Naive thymus-derived CD4-positive, alpha-beta T cell (primary cell): ENCODE measurements at regions of chr1 and their contacts with region 1.

Region 1: DNA sequence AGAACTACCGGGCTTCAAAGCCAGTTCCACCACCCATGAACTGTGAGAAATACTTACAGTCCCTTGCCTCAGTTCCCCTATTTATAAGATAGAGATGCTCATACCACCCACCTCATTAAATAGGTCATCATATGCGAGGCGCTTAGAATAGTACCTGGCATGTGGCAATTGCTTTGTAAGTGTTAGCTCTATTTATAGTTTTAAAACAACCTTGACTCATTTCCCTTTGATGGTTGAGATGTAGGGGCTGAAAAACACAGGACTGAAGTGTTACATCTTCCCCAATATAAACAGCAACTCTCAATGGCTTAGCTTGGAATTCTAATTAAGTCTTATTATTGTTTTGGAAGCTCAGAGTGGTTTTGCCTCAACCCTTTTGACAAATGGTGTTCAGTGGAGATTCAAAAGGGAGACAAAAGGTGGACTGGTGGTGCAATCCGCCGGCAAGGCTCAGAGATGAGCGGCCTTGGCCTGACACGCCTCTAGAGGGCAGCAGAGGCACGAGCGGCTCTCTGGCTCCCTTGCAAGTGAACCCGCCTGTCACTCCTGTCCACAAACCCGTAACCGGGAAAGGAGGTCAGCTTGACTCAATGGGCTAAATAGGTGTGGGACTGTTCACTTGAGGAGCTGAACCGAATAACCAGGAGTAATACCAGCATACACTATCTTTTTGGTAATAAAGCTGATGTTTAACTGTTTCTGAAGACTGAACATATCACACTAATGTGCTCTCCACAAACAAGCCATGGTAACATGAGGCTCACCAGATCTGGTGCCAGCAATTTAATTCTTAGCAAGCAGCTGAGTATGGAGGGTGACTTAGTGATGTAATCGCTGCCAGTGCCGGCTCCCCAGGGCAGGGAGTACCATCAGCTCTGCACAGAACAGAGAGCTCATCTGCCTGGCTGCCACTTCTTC is 19.5 kb upstream of the SMYD2 start:
- DNase-seq: peak; percentile 47 to 82 (median 73)
- ATAC-seq: peak; percentile 98
- H3K4me3 ChIP-seq: no peak overlapping the region
- H3K4me3 Mint-ChIP-seq: peak overlapping the region in 1 of 10 donors; percentile 28
- H3K27ac ChIP-seq: no peak overlapping the region
- H3K27ac Mint-ChIP-seq: no peak overlapping the region
- H3K4me1 ChIP-seq: no peaks in the 10 kb centered on the region
- H3K4me1 Mint-ChIP-seq: peaks cover 0 to 15% (median 0%) of the 10 kb centered on the region in 7 donors
- H3K27me3 ChIP-seq: peaks cover 0 to 9% of the 10 kb centered on the region in 2 donors
- H3K27me3 Mint-ChIP-seq: peaks cover 55 to 75% (median 68%) of the 10 kb centered on the region in 5 donors

Region 2: GRCh38 chr1:213374369-213374768 is 887.1 kb before region 1 on chr1:
- CTCF ChIA-PET with region 1: no interaction called
- POLR2A ChIA-PET with region 1: no interaction called
- intact Hi-C with region 1: loop called in 1 of 2 experiments (anchors 1 kb)
- DNase-seq: peak; percentile 12 to 60 (median 42)
- ATAC-seq: peak; percentile 61
- H3K4me3 ChIP-seq: no peak overlapping the region
- H3K4me3 Mint-ChIP-seq: no peak overlapping the region
- H3K27ac ChIP-seq: no peak overlapping the region
- H3K27ac Mint-ChIP-seq: no peak overlapping the region
- H3K4me1 ChIP-seq: no peaks in the 10 kb centered on the region
- H3K4me1 Mint-ChIP-seq: no peaks in the 10 kb centered on the region
- H3K27me3 ChIP-seq: no peaks in the 10 kb centered on the region
- H3K27me3 Mint-ChIP-seq: peaks cover 0 to 7% (median 0%) of the 10 kb centered on the region in 5 donors

Region 3: DNA sequence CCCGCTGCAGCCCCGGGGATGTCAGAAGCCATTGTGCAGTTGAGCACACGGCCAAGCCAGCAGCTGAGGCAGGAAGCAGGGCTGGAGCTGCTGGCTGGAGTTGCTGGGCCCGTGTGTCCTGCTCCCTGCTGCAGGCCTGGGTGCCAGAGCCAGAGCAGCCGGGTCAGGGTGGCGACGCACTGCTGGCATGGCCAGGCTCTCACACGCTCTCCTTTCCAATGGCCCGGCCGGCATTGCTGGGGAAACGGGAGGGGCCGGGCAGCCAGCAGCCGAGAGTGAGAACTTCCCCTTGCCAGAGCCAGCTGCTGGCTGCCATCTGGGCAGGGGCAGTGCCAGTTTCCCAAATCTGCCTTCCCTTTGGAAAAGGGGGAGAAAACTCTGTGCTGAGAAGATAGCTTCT is 356.1 kb before region 1 on chr1:
- CTCF ChIA-PET with region 1: no interaction called
- POLR2A ChIA-PET with region 1: no interaction called
- intact Hi-C with region 1: no loop called
- DNase-seq: no peak
- ATAC-seq: no peak
- H3K4me3 ChIP-seq: no peak overlapping the region
- H3K4me3 Mint-ChIP-seq: no peak overlapping the region
- H3K27ac ChIP-seq: no peak overlapping the region
- H3K27ac Mint-ChIP-seq: no peak overlapping the region
- H3K4me1 ChIP-seq: no peaks in the 10 kb centered on the region
- H3K4me1 Mint-ChIP-seq: peaks cover 0 to 5% (median 0%) of the 10 kb centered on the region in 7 donors
- H3K27me3 ChIP-seq: no peaks in the 10 kb centered on the region
- H3K27me3 Mint-ChIP-seq: peaks cover 0 to 7% (median 0%) of the 10 kb centered on the region in 5 donors

Region 4: DNA sequence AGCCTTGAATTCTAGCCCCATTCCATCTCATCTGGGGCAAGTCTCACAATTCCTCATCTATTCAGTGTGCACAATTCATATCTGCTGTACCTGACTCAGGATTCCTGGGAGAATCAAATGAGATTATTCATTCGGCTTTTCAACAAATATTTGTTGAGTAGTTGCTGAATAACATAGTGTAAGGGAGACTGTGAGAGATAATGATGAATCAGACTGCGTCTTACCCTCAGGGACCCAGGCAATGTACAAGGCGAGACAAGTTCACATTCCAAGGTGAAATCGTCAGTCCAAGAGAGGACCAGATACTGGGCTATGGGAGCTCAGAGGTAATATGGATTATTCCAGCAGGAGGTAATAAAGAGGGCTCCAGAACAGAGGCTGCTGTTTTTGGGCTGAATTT is 48.3 kb before region 1 on chr1:
- CTCF ChIA-PET with region 1: interaction called, 9 read pairs
- POLR2A ChIA-PET with region 1: no interaction called
- intact Hi-C with region 1: loop called (anchors 1 kb)
- DNase-seq: no peak
- ATAC-seq: no peak
- H3K4me3 ChIP-seq: no peak overlapping the region
- H3K4me3 Mint-ChIP-seq: no peak overlapping the region
- H3K27ac ChIP-seq: no peak overlapping the region
- H3K27ac Mint-ChIP-seq: no peak overlapping the region
- H3K4me1 ChIP-seq: no peaks in the 10 kb centered on the region
- H3K4me1 Mint-ChIP-seq: peaks cover 0 to 10% (median 5%) of the 10 kb centered on the region in 7 donors
- H3K27me3 ChIP-seq: no peaks in the 10 kb centered on the region
- H3K27me3 Mint-ChIP-seq: peaks cover 7 to 38% (median 13%) of the 10 kb centered on the region in 5 donors

Region 5: DNA sequence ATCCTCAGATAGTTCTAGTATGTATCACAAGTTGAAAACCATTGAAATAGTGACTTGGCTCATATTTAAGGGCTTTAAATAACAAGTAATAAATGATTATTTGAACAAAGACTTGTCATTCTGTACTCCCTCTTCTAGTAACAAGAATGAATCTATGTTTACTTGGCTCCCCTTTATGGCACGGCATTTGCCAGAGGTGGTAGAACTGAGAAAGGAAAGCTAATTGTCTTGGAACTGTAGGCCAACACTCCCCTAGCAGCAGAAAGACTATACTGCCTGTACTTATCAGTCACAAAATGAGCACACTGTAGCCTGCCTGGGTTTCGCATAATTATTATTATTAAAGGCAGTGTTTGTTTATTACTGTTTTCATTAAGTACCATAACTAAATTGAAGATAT is 10.1 kb before region 1 on chr1:
- CTCF ChIA-PET with region 1: interaction called, 10 read pairs
- POLR2A ChIA-PET with region 1: no interaction called
- intact Hi-C with region 1: no loop called
- DNase-seq: no peak
- ATAC-seq: no peak
- H3K4me3 ChIP-seq: no peak overlapping the region
- H3K4me3 Mint-ChIP-seq: no peak overlapping the region
- H3K27ac ChIP-seq: no peak overlapping the region
- H3K27ac Mint-ChIP-seq: no peak overlapping the region
- H3K4me1 ChIP-seq: no peaks in the 10 kb centered on the region
- H3K4me1 Mint-ChIP-seq: no peaks in the 10 kb centered on the region
- H3K27me3 ChIP-seq: no peaks in the 10 kb centered on the region
- H3K27me3 Mint-ChIP-seq: peaks cover 21 to 55% (median 32%) of the 10 kb centered on the region in 5 donors

Region 6: GRCh38 chr1:214310010-214310409 is 48.5 kb after region 1 on chr1:
- CTCF ChIA-PET with region 1: interaction called, 11 read pairs
- POLR2A ChIA-PET with region 1: no interaction called
- intact Hi-C with region 1: no loop called
- DNase-seq: no peak
- ATAC-seq: no peak
- H3K4me3 ChIP-seq: no peak overlapping the region
- H3K4me3 Mint-ChIP-seq: peak overlapping the region in 9 of 10 donors; percentile 7 to 78 (median 57)
- H3K27ac ChIP-seq: no peak overlapping the region
- H3K27ac Mint-ChIP-seq: peak overlapping the region in 2 of 9 donors; percentile 22 to 49
- H3K4me1 ChIP-seq: peaks cover 17% of the 10 kb centered on the region in 2 donors
- H3K4me1 Mint-ChIP-seq: peaks cover 21 to 48% (median 43%) of the 10 kb centered on the region in 7 donors
- H3K27me3 ChIP-seq: no peaks in the 10 kb centered on the region
- H3K27me3 Mint-ChIP-seq: no peaks in the 10 kb centered on the region

Region 7: GRCh38 chr1:214584805-214585766 is 323.6 kb after region 1 on chr1:
- CTCF ChIA-PET with region 1: no interaction called
- POLR2A ChIA-PET with region 1: no interaction called
- intact Hi-C with region 1: loop called (anchors 1 to 2 kb)
- DNase-seq: peak in 3 of 9 donors; percentile 9 to 12 (median 10)
- ATAC-seq: peak; percentile 45
- H3K4me3 ChIP-seq: no peak overlapping the region
- H3K4me3 Mint-ChIP-seq: no peak overlapping the region
- H3K27ac ChIP-seq: no peak overlapping the region
- H3K27ac Mint-ChIP-seq: no peak overlapping the region
- H3K4me1 ChIP-seq: no peaks in the 10 kb centered on the region
- H3K4me1 Mint-ChIP-seq: peaks cover 0 to 4% (median 0%) of the 10 kb centered on the region in 7 donors
- H3K27me3 ChIP-seq: no peaks in the 10 kb centered on the region
- H3K27me3 Mint-ChIP-seq: peaks cover 0 to 12% (median 4%) of the 10 kb centered on the region in 5 donors

Region 8: GRCh38 chr1:215526553-215527151 is 1265.2 kb after region 1 on chr1:
- CTCF ChIA-PET with region 1: interaction called, 3 read pairs
- POLR2A ChIA-PET with region 1: no interaction called
- intact Hi-C with region 1: loop called (anchors 1 to 5 kb)
- DNase-seq: peak in 7 of 9 donors; percentile 16 to 56 (median 47)
- ATAC-seq: peak; percentile 52
- H3K4me3 ChIP-seq: no peak overlapping the region
- H3K4me3 Mint-ChIP-seq: no peak overlapping the region
- H3K27ac ChIP-seq: no peak overlapping the region
- H3K27ac Mint-ChIP-seq: no peak overlapping the region
- H3K4me1 ChIP-seq: no peaks in the 10 kb centered on the region
- H3K4me1 Mint-ChIP-seq: peaks cover 0 to 3% (median 0%) of the 10 kb centered on the region in 7 donors
- H3K27me3 ChIP-seq: no peaks in the 10 kb centered on the region
- H3K27me3 Mint-ChIP-seq: peaks cover 6 to 20% (median 12%) of the 10 kb centered on the region in 5 donors